ENCODE measurements at regions of chr16 and their contacts with region 1.

Region 1: GRCh38 chr16:50665128-50665878 is 15.8 kb downstream of the SNX20 start:
- DNase-seq: peak; percentile 73 to 84 (median 76)
- H3K4me3 ChIP-seq: peak overlapping the region; percentile 76
- H3K4me3 Mint-ChIP-seq: peak overlapping the region; percentile 69 to 93 (median 84)
- H3K27ac ChIP-seq: peak overlapping the region; percentile 18
- H3K27ac Mint-ChIP-seq: peak overlapping the region in 7 of 8 donors; percentile 61 to 97 (median 83)
- H3K4me1 ChIP-seq: peaks cover 30% of the 10 kb centered on the region
- H3K4me1 Mint-ChIP-seq: peaks cover 29 to 43% (median 38%) of the 10 kb centered on the region in 3 donors
- H3K27me3 ChIP-seq: no peaks in the 10 kb centered on the region
- H3K27me3 Mint-ChIP-seq: no peaks in the 10 kb centered on the region

Region 2: GRCh38 chr16:50024684-50025536 is 640.4 kb before region 1 on chr16 and contains the start of gene CNEP1R1:
- CTCF ChIA-PET with region 1: interaction called, 30 read pairs
- POLR2A ChIA-PET with region 1: no interaction called
- DNase-seq: peak; percentile 85 to 95 (median 94)
- H3K4me3 ChIP-seq: peak within 1 kb of the TSS; percentile 86
- H3K4me3 Mint-ChIP-seq: peak within 1 kb of the TSS; percentile 88 to 99 (median 97)
- H3K27ac ChIP-seq: peak within 1 kb of the TSS; percentile 71
- H3K27ac Mint-ChIP-seq: peak within 1 kb of the TSS; percentile 89 to 98 (median 94)
- H3K4me1 ChIP-seq: peaks cover 13% of the 10 kb centered on the region
- H3K4me1 Mint-ChIP-seq: peaks cover 24 to 50% (median 40%) of the 10 kb centered on the region in 3 donors
- H3K27me3 ChIP-seq: no peaks in the 10 kb centered on the region
- H3K27me3 Mint-ChIP-seq: peaks cover 0 to 4% of the 10 kb centered on the region in 2 donors
- total RNA-seq, gene CNEP1R1: 21.2 to 23.6 TPM

Region 3: GRCh38 chr16:50326949-50327402 is 338.3 kb before region 1 on chr16:
- CTCF ChIA-PET with region 1: interaction called, 23 read pairs
- POLR2A ChIA-PET with region 1: no interaction called
- DNase-seq: peak; percentile 53 to 85 (median 78)
- H3K4me3 ChIP-seq: no peak overlapping the region
- H3K4me3 Mint-ChIP-seq: peak overlapping the region in 3 of 7 donors; percentile 25 to 53 (median 26)
- H3K27ac ChIP-seq: no peak overlapping the region
- H3K27ac Mint-ChIP-seq: peak overlapping the region; percentile 62 to 96 (median 90)
- H3K4me1 ChIP-seq: peaks cover 25% of the 10 kb centered on the region
- H3K4me1 Mint-ChIP-seq: peaks cover 29 to 71% (median 38%) of the 10 kb centered on the region in 3 donors
- H3K27me3 ChIP-seq: no peaks in the 10 kb centered on the region
- H3K27me3 Mint-ChIP-seq: no peaks in the 10 kb centered on the region

Region 4: DNA sequence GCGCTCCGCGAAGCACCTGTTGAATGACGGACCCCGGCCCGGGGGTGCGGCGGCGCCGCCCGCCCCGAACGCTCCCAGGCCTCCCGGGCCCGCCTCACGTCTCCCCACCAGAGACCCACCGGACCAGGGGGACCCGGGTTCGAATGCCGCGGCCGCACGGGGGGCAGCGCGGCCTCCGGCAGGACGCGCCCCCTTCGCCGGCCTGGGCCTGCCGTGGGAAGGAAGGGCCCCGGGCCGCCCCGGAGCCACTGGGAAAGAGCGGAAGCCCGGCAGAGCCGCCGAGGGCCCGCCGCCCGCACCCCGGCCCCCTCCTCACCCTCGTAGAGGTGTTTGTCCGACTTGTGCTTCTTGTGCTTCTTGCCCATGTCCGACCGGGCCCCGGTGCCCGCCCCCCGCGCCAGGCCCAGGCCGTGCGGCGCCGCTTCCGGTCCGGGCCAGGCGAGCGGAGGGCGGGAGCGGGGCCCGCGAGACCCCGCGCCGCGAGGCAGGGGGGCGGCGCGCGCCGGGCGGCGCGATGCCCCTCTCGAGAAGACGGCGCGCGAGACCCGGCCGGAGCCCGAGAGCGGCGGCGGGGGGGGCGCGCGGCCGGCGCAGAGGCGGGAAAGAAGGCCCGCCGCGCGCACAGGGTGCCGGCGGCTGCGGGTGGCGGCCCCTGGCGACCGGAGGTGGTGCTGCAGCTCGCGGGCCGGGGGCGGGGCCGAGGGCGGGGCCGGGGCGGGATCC is 296.7 kb before region 1 on chr16 and contains the start of gene BRD7:
- CTCF ChIA-PET with region 1: interaction called, 23 read pairs
- POLR2A ChIA-PET with region 1: no interaction called
- DNase-seq: peak; percentile 57 to 78 (median 65)
- H3K4me3 ChIP-seq: peak within 1 kb of the TSS; percentile 69
- H3K4me3 Mint-ChIP-seq: peak within 1 kb of the TSS; percentile 84 to 98 (median 95)
- H3K27ac ChIP-seq: peak within 1 kb of the TSS; percentile 49
- H3K27ac Mint-ChIP-seq: peak within 1 kb of the TSS; percentile 88 to 99 (median 97)
- H3K4me1 ChIP-seq: peaks cover 39% of the 10 kb centered on the region
- H3K4me1 Mint-ChIP-seq: peaks cover 46 to 57% (median 55%) of the 10 kb centered on the region in 3 donors
- H3K27me3 ChIP-seq: no peaks in the 10 kb centered on the region
- H3K27me3 Mint-ChIP-seq: peaks cover 0 to 2% of the 10 kb centered on the region in 2 donors
- total RNA-seq, gene BRD7: 101 to 103 TPM

Region 5: GRCh38 chr16:50719518-50720337 is 54.4 kb after region 1 on chr16:
- CTCF ChIA-PET with region 1: interaction called, 13 read pairs
- POLR2A ChIA-PET with region 1: no interaction called
- DNase-seq: peak in 1 of 5 donors; percentile 42
- H3K4me3 ChIP-seq: no peak overlapping the region
- H3K4me3 Mint-ChIP-seq: no peak overlapping the region
- H3K27ac ChIP-seq: no peak overlapping the region
- H3K27ac Mint-ChIP-seq: peak overlapping the region; percentile 4 to 77 (median 44)
- H3K4me1 ChIP-seq: peaks cover 29% of the 10 kb centered on the region
- H3K4me1 Mint-ChIP-seq: peaks cover 31 to 47% (median 46%) of the 10 kb centered on the region in 3 donors
- H3K27me3 ChIP-seq: no peaks in the 10 kb centered on the region
- H3K27me3 Mint-ChIP-seq: no peaks in the 10 kb centered on the region

Region 6: DNA sequence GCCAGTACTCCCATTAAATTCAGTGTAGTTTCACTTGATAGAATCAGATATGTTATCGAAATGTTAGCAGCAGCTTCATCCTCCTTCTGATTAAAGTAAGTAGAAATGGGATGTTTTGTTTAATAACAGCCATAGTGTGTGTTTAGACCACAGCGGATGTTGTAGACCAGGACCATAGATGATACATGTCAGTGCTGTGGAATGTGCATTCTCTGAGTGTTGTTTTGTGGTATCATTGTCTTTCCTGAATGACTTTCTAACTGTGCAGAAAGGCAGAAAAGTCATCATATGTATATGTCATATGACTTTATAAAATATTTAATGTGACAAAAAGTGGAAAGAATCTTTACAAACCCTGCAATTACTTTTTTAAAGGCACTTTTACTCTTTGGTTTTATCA is 132.2 kb after region 1 on chr16:
- CTCF ChIA-PET with region 1: interaction called, 10 read pairs
- POLR2A ChIA-PET with region 1: no interaction called
- DNase-seq: no peak
- H3K4me3 ChIP-seq: no peak overlapping the region
- H3K4me3 Mint-ChIP-seq: no peak overlapping the region
- H3K27ac ChIP-seq: no peak overlapping the region
- H3K27ac Mint-ChIP-seq: peak overlapping the region in 6 of 8 donors; percentile 1 to 83 (median 30)
- H3K4me1 ChIP-seq: no peaks in the 10 kb centered on the region
- H3K4me1 Mint-ChIP-seq: peaks cover 4 to 24% (median 4%) of the 10 kb centered on the region in 3 donors
- H3K27me3 ChIP-seq: no peaks in the 10 kb centered on the region
- H3K27me3 Mint-ChIP-seq: no peaks in the 10 kb centered on the region